Ascending aorta (tissue), 2 donors: ENCODE measurements at regions of chr17 and their contacts with region 1.

Region 1: DNA sequence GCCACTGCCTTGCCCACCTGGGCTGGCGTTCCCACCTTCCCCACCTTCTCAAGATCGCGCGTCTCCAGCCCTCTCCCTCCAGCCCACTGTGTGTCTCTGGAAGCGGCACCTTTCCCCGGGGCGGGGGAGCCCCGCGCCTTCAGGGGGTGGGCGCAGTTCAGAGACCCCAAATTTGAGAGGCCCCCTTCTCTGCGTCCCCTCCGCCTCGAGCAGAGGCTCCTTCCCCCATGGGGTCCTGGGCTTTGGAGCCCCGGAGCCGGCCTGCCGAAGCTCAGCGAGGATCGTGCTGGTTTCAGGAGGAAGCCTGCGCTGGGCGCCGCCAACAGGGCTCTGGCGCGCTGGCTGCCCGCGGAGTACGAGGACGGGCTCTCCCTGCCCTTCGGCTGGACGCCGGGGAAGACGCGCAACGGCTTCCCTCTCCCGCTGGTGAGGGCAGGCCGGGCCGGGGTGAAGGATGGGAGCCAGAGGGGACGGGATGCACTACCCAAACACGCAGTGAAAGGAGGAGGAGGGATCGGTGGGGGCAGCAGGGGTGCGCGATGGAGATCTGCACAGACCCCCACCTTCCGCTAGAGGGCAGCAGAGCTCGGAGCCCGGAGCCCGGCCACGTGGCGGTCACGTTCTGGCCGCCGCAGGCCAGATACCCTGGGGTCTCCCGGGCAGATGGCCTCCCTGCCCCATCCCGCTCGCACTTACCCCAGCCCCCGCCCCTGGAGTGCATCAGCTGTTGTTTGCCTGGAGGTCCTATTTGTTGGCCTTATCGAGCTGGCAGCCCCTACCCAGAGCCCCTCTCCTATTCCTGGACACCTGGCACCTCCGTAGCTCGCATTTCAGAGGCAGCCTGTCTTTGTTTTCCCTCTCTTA is 11.1 kb downstream of the LPO start:
- DNase-seq: peak in 1 of 2 donors; percentile 74
- H3K4me3 ChIP-seq: peak overlapping the region; percentile 56 to 64
- H3K27ac ChIP-seq: no peak overlapping the region
- H3K4me1 ChIP-seq: peaks cover 4% of the 10 kb centered on the region in 2 donors
- H3K27me3 ChIP-seq: peaks cover 4% of the 10 kb centered on the region
- CTCF ChIP-seq: peak; percentile 73 to 90 (median 88)

Region 2: GRCh38 chr17:58303971-58304725 is 54.6 kb after region 1 on chr17:
- intact Hi-C with region 1: no loop called
- DNase-seq: peak in 1 of 2 donors; percentile 56
- H3K4me3 ChIP-seq: no peak overlapping the region
- H3K27ac ChIP-seq: no peak overlapping the region
- H3K4me1 ChIP-seq: no peaks in the 10 kb centered on the region
- H3K27me3 ChIP-seq: no peaks in the 10 kb centered on the region
- CTCF ChIP-seq: peak in 2 of 3 experiments; percentile 32 to 47

Region 3: DNA sequence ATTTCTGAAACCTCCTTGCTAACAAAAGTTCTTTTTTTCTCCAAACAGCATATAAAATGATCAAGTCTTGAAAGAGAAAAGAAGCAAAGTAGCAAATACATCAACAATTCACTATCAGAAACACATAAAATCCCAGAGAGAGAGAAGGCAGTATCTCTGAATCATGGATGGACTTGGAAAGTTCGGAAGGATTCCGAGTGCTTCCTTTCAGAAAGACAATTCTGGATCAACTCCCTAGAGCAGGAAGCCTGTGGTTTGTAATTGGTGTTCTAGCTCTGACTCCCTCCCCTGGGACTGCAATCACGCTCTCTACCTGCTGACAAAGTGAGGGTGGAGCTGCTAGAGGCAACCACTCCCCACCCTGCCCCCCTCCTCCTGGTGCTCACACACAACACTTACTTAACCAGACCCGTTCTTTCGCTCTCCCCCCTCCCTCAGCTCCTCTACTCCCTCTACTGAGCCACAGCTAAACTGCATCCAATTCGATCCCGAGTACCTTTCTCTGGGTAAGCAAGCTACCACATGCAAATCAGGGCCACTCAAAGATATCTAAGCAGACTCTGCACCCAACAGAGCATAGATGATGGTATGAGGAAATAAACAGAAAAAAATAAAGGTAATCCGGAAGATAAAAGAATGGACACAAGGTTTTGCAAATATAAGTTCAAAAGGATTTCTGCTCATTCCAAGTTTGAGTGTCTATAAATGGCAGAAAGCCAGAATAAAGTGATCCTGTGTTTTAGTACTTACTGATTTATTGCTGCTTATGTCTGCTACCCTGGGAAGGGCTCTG is 168.0 kb after region 1 on chr17 and contains the start of gene RNF43:
- intact Hi-C with region 1: loop called (anchors 5 kb)
- DNase-seq: peak; percentile 77 to 92
- H3K4me3 ChIP-seq: peak within 1 kb of the TSS; percentile 34 to 53
- H3K27ac ChIP-seq: no peak within 1 kb of the TSS
- H3K4me1 ChIP-seq: no peaks in the 10 kb centered on the region
- H3K27me3 ChIP-seq: no peaks in the 10 kb centered on the region
- CTCF ChIP-seq: peak; percentile 72 to 80 (median 77)
- total RNA-seq, gene RNF43: 0.53 TPM